K562 (cell line): ENCODE measurements at regions of chr10 and their contacts with region 1.

Region 1: GRCh38 chr10:79068562-79069324 is at the start of gene ZMIZ1:
- DNase-seq: peak; percentile 83 to 97 (median 92)
- ATAC-seq: peak; percentile 68
- H3K4me3 ChIP-seq: peak within 1 kb of the TSS; percentile 83
- H3K27ac ChIP-seq: peak within 1 kb of the TSS; percentile 84
- H3K4me1 ChIP-seq: peaks cover 14 to 54% of the 10 kb centered on the region in 2 experiments; a peak in 4 of 5 replicates
- H3K27me3 ChIP-seq: no peaks in the 10 kb centered on the region
- CTCF ChIP-seq: peak in 2 of 3 experiments; percentile 55 to 83; a peak in 4 of 6 replicates
- EP300 ChIP-seq: peak; percentile 71
- POLR2A ChIP-seq: no peak; the same call in 1 of the 2 replicates
- RAD21 ChIP-seq: peak; percentile 57 to 71
- polyA plus RNA-seq, gene ZMIZ1: 1.0 to 1.9 TPM

Region 2: DNA sequence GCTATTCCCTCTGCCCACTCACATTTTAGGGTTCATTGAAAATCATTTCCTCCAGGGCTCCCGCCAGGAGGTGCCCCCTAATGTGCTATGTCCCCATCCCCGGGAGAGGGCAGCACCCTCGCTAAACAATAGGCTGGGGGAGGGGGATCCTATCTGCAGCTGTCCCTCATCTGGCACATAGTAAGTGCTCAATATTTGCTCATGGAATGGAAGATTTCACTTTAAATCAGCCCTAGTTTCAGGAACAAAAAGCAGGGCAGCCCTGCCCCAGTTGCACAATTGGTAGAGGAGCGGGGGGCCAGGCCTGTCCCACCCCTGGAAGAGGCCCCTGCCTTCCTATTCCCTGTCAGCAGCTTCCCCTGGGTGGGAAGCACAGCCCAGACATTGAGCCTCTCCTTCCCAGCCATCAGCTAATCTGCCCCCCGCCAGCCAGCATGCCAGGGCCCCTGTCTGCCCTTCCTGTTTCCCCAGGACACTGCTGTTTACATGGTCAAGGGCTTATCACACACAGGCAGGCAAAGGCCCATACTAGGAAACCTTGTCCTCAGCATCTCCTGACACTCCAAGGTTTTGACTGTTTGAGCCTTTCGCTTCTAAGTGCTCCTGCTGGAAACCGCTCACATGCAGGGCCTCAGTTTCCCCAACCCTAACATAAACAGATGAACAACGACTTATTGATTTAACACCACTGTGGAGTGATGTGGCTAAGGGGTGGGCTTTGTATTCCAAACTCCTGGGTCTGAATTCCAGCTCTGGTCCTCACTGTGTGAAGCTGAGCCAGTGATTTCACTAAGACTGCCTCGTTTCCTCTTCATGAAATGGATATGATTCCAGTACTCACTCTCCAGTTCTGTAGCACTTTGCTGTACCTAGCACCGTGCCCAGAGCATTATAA is 130.7 kb before region 1 on chr10:
- CTCF ChIA-PET with region 1: interaction called, 4 read pairs
- POLR2A ChIA-PET with region 1: interaction called, 3 read pairs
- in situ Hi-C with region 1: no loop called
- intact Hi-C with region 1: loop called (anchors 2 kb)
- DNase-seq: peak; percentile 65 to 84 (median 81)
- ATAC-seq: peak; percentile 82
- H3K4me3 ChIP-seq: no peak overlapping the region
- H3K27ac ChIP-seq: no peak overlapping the region
- H3K4me1 ChIP-seq: peaks cover 5 to 17% of the 10 kb centered on the region in 2 experiments
- H3K27me3 ChIP-seq: peaks cover 20 to 37% of the 10 kb centered on the region in 2 experiments; a peak in 4 of 5 replicates
- CTCF ChIP-seq: peak; percentile 69 to 93 (median 84)
- EP300 ChIP-seq: peak; percentile 69
- POLR2A ChIP-seq: no peak
- RAD21 ChIP-seq: peak; percentile 48 to 70

Region 3: DNA sequence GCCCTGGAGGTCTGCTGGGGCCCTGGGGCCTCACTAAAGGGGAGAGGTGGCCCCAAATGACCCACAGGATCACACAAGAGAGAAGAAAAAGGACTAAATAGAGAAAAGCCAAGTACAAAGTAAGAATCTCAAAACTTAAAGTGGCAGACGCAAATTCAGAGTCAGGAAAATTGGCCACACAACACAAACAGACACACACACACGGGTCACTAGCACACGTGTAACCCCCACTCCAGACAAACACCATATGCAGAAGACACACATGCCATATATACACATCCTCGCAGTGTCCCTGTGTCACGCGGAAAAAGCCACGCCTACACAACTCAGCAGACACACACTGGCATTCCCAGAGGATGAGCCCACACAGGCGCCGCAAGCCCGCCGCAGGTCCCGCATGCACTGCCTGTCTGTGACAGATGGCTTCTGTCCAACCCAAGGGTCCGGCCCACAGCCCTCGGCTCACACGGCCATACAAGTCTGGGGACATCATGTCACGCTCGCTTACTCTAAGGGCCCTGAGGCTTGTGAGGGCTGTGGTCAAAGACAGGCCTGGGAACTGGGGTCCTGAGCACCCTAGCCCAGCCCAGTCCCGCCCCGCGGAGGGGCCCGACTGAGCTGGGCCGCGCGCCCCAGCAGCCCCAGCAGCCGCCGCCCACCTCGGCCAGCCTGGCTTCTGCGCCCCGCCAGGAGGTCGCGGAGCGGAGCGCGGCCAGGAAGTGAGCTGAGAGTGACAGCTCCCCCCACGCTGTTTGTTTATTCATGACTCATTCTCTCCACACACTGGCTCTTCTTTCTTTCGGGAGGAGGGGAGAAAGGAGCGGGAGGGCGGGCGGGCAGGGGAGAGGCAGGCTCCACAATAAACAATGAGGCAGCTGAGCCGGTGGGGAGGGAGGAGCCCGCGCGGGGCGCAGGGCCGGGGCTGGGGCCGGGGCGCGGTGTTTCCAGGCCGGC is 95.5 kb before region 1 on chr10:
- CTCF ChIA-PET with region 1: interaction called, 3 read pairs
- POLR2A ChIA-PET with region 1: interaction called, 4 read pairs
- in situ Hi-C with region 1: no loop called
- intact Hi-C with region 1: loop called (anchors 2 kb)
- DNase-seq: peak; percentile 94 to 98 (median 96)
- ATAC-seq: peak; percentile 84
- H3K4me3 ChIP-seq: peak overlapping the region; percentile 44
- H3K27ac ChIP-seq: peak overlapping the region; percentile 98
- H3K4me1 ChIP-seq: peaks cover 32 to 35% of the 10 kb centered on the region in 2 experiments
- H3K27me3 ChIP-seq: peaks cover 3 to 19% of the 10 kb centered on the region in 2 experiments; a peak in 4 of 5 replicates
- CTCF ChIP-seq: peak in 1 of 3 experiments; percentile 15; a peak in 1 of 6 replicates
- EP300 ChIP-seq: peak; percentile 79
- POLR2A ChIP-seq: peak; percentile 85
- RAD21 ChIP-seq: no peak; a peak in 1 of 4 replicates

Region 4: DNA sequence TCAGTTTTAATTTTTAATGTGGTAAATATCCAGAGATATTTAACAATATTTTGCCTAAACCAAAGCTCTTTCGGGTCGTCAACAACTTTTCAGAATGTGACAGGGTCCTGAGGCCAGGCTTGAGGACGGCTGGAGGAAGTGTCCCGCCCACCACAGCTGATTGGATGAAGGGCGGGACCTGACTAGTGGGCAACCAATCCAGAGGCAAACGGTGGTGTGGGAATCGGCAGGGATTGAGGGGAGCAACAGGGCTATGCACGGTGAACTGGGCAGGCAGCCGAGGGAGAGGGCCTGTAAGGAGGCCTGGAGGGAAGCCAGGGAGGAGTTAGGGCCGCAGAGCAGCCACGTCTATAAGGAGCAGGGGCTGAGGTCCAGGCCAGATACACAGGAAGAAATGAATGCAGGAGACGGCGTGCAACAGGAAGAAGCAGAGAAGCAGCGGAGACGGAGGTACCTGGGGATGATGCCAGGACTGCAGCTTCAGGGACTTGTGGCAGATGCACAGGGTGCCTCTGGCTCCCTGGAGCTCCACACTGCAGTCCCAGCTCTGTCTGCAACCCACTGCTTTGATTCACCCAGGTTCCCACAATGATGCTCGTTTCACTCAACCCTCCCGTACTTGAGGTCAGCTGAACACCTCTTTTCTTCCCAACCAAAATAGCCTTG is 46.0 kb before region 1 on chr10:
- CTCF ChIA-PET with region 1: no interaction called
- POLR2A ChIA-PET with region 1: no interaction called
- in situ Hi-C with region 1: no loop called
- intact Hi-C with region 1: loop called (anchors 5 kb)
- DNase-seq: peak; percentile 83 to 96 (median 94)
- ATAC-seq: peak; percentile 90
- H3K4me3 ChIP-seq: no peak overlapping the region
- H3K27ac ChIP-seq: no peak overlapping the region
- H3K4me1 ChIP-seq: peaks cover 29 to 61% of the 10 kb centered on the region in 2 experiments
- H3K27me3 ChIP-seq: no peaks in the 10 kb centered on the region
- CTCF ChIP-seq: no peak
- EP300 ChIP-seq: no peak
- POLR2A ChIP-seq: no peak
- RAD21 ChIP-seq: no peak

Region 5: DNA sequence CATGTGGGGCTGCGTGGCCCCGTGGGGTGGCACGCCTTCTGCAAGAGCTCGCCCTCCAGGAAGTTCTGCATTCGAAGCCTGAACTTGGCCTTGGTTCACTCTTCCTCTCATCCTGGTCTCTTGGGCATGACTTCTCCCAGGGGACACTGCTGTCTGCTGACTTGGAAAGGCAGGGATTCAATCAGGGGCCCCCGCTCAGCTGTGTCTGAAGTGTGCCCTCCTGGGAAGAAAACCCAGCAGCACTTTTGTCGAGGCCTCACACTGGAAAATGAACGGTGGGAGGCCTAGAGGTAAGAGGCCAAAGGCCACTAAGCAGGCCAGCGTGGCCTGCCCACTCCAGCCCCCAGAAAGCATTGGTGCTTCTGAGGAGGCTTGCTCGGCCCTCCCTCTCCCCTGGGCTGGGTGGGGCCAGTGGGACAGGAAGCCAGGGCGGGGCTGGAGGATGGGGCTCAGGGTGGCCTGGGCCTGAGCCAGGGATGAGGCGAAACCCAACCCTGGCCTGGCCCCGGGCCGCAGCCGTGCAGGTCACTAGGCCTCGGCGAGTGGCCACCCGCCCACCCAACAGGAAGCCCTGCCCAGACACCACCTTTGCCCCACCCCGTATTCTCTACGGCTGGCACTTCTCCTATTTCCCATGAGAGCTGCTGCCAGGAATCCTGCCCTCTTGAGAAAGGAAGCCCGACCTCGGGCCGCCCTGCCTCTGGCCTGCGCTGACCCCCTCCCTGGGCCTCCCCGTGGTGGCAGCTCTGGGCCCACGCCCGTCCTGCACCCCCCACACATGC is 81.1 kb after region 1 on chr10:
- CTCF ChIA-PET with region 1: no interaction called
- POLR2A ChIA-PET with region 1: no interaction called
- in situ Hi-C with region 1: no loop called
- intact Hi-C with region 1: loop called (anchors 5 kb)
- DNase-seq: peak; percentile 92 to 97 (median 94)
- ATAC-seq: peak; percentile 88
- H3K4me3 ChIP-seq: no peak overlapping the region; the same call in 1 of the 2 replicates
- H3K27ac ChIP-seq: peak overlapping the region; percentile 85
- H3K4me1 ChIP-seq: peaks cover 83 to 89% of the 10 kb centered on the region in 2 experiments
- H3K27me3 ChIP-seq: no peaks in the 10 kb centered on the region
- CTCF ChIP-seq: no peak
- EP300 ChIP-seq: peak; percentile 41; the same call in 1 of the 2 replicates
- POLR2A ChIP-seq: peak; percentile 71
- RAD21 ChIP-seq: no peak; a peak in 1 of 4 replicates

Region 6: DNA sequence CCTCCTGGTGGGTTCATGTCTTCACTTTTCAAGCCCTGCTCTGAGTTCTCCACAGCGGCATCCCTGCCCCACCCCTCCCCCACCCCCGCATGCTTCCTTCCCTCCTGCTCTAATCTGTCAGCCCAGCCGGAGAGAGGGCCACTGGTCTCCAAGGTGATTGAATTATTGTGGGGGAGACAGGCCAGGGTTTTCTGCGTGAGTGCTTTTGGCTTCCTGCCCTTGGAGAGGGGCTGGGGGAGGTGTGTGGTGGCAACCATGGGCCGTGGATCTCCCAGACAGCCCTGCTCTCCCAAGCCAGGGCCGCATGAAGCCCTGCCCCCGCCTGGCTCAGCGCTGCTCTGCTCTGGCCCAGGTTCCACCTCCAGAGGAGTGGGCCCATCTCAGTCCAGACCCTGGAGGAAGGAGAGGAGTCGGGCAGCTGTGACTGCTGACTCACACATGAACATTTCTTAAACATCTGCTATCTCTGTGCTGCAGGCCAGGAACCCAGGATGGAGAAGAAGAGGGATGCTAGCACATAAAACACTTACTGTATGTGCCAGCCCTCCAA is 109.9 kb after region 1 on chr10:
- CTCF ChIA-PET with region 1: no interaction called
- POLR2A ChIA-PET with region 1: interaction called, 3 read pairs
- in situ Hi-C with region 1: no loop called
- intact Hi-C with region 1: loop called (anchors 1 kb)
- DNase-seq: peak; percentile 93 to 99 (median 96)
- ATAC-seq: peak; percentile 89
- H3K4me3 ChIP-seq: peak overlapping the region; percentile 8; the same call in 1 of the 2 replicates
- H3K27ac ChIP-seq: peak overlapping the region; percentile 94
- H3K4me1 ChIP-seq: peaks cover 83 to 93% of the 10 kb centered on the region in 2 experiments
- H3K27me3 ChIP-seq: no peaks in the 10 kb centered on the region
- CTCF ChIP-seq: peak; percentile 17 to 38 (median 37); a peak in 4 of 6 replicates
- EP300 ChIP-seq: peak; percentile 89
- POLR2A ChIP-seq: no peak; the same call in 1 of the 2 replicates
- RAD21 ChIP-seq: peak; percentile 51 to 61

Region 7: GRCh38 chr10:79286318-79286951 is 217.7 kb after region 1 on chr10:
- CTCF ChIA-PET with region 1: no interaction called
- POLR2A ChIA-PET with region 1: no interaction called
- in situ Hi-C with region 1: no loop called
- intact Hi-C with region 1: no loop called
- DNase-seq: peak; percentile 59 to 83 (median 75)
- ATAC-seq: peak; percentile 58
- H3K4me3 ChIP-seq: no peak overlapping the region
- H3K27ac ChIP-seq: no peak overlapping the region
- H3K4me1 ChIP-seq: peaks cover 0 to 22% of the 10 kb centered on the region in 2 experiments; a peak in 3 of 5 replicates
- H3K27me3 ChIP-seq: no peaks in the 10 kb centered on the region
- CTCF ChIP-seq: no peak
- EP300 ChIP-seq: no peak
- POLR2A ChIP-seq: no peak
- RAD21 ChIP-seq: no peak